Heart left ventricle (tissue), 16 donors: ENCODE measurements at regions of chr1 and their contacts with region 1.

Region 1: GRCh38 chr1:81305997-81306452 is 494.7 kb upstream of the ADGRL2 start:
- DNase-seq: peak in 3 of 5 donors; percentile 19 to 30 (median 25)
- ATAC-seq: peak; percentile 89 to 91 (median 90)
- H3K4me3 ChIP-seq: peak overlapping the region; percentile 33 to 76 (median 54)
- H3K27ac ChIP-seq: peak overlapping the region in 8 of 12 donors; percentile 11 to 71 (median 44)
- H3K4me1 ChIP-seq: peaks cover 0 to 9% (median 0%) of the 10 kb centered on the region in 12 donors
- H3K27me3 ChIP-seq: no peaks in the 10 kb centered on the region
- CTCF ChIP-seq: peak in 11 of 12 donors; percentile 18 to 69 (median 54)
- POLR2A ChIP-seq: no peak

Region 2: DNA sequence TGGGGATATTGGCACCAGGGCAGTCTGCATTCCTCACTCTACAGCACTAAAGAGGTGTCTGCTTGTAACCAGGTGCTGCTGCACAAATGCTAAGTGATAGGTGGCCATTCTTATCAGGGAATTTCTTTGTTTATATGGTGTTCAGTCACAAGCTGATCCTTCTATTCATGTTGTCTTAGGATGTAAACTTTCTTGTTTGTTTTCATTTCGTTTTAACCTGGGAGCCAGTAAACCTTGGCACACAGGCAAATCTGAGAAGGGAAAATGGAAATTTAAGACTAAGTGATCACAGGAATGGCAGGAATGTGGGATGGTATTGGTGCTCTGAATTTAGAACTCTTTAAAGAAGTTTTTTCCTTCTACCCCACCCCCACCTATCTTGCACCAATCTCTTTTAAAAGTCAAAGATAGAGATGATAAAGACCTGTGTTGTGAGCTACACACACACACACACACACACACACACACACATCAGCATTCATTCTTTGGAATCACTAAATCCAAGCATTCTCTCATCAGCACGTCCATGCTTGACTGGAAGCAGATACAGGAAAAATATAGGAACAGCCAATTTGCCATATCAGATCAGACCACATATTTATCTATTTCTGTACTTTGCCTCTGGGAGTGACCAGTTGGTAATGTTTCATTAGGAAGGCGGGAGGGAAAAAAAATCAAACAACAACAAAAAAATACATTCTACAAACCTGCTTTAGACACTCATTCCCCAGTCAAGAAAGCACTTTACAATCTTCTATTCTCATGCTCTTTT is 43.4 kb after region 1 on chr1:
- intact Hi-C with region 1: no loop called
- DNase-seq: no peak
- ATAC-seq: no peak
- H3K4me3 ChIP-seq: no peak overlapping the region
- H3K27ac ChIP-seq: no peak overlapping the region
- H3K4me1 ChIP-seq: peaks cover 0 to 11% (median 0%) of the 10 kb centered on the region in 12 donors
- H3K27me3 ChIP-seq: no peaks in the 10 kb centered on the region
- CTCF ChIP-seq: no peak
- POLR2A ChIP-seq: no peak

Region 3: DNA sequence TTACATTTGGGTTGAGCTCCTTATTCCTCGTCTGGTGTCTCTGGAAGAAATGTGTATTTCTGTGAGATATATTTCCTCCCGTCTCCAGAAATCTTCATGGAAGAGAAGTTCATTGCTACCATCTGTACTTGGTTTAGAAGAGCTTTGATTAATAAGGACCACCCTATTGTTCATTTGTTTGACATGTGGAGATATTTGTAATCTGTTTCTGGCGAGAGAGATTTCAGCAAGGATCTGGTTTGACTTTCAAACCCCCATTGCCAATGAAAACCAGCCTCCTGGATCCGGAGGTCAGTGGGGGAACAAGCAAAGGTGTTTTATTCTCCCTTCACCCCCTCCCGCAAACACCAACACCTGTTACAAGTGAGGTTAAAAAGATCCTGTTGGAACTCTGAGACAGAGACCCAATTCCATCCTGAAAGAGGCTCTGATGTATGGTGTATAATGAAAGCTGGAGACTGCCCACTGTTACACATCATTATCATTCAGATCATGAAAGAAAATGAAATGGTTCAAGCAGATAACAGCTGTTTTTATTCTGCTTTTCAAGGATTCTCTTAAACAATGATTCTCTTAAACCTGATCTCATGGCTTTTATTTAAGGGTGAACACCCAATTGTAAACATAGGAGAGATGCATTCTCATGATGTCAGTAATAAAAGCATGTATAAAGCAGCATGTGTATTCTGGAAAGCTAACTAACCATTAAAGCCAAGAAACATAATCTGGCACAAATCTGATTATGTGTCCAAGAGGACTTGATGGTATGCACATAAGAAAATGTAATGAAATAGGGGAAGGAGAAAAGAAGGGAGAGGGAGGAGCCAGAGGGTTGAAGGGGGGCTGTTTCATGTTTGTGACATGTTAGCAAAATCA is 101.2 kb after region 1 on chr1:
- intact Hi-C with region 1: loop called in 7 of 10 experiments (anchors 2 to 10 kb)
- DNase-seq: no peak
- ATAC-seq: no peak
- H3K4me3 ChIP-seq: no peak overlapping the region
- H3K27ac ChIP-seq: peak overlapping the region in 2 of 12 donors; percentile 13 to 43
- H3K4me1 ChIP-seq: peaks cover 0 to 30% (median 10%) of the 10 kb centered on the region in 12 donors
- H3K27me3 ChIP-seq: no peaks in the 10 kb centered on the region
- CTCF ChIP-seq: no peak
- POLR2A ChIP-seq: no peak

Region 4: DNA sequence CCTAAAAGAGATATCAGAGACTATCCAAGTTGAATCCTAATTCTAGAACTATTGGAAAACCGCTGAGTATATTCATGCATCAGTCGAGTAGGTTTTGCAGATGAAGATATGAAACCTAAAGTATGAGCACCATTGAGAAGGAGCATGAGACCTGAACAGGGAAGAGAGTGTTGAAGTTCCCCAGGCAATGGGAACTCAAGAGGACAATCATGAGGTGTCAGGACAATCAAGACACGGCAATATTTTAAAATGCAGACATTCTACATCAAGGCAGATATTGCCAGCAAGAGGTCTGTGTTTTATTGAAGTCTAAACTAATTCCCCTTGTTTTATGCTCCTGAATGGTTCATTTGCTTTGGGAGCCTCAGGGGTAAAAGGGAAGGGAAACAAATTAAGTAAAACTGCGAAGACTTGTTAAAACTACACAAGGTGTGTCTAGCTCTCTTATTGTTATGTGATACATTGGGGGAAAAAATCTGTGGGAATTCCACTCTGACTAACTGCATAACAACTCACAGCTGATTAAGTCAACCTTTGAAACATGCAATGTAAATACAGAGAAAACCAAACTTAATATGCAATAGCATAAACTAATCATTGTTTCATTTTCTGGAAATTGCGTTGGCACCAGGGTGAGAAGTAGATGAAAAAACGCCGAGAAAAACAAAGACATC is 146.8 kb after region 1 on chr1:
- intact Hi-C with region 1: no loop called
- DNase-seq: no peak
- ATAC-seq: no peak
- H3K4me3 ChIP-seq: no peak overlapping the region
- H3K27ac ChIP-seq: no peak overlapping the region
- H3K4me1 ChIP-seq: no peaks in the 10 kb centered on the region
- H3K27me3 ChIP-seq: no peaks in the 10 kb centered on the region
- CTCF ChIP-seq: no peak
- POLR2A ChIP-seq: no peak

Region 5: GRCh38 chr1:81478219-81478618 is 172.2 kb after region 1 on chr1:
- intact Hi-C with region 1: loop called in 1 of 10 experiments (anchors 5 kb)
- DNase-seq: peak; percentile 66 to 82 (median 71)
- ATAC-seq: peak; percentile 92 to 99 (median 98)
- H3K4me3 ChIP-seq: peak overlapping the region in 9 of 12 donors; percentile 29 to 44 (median 35)
- H3K27ac ChIP-seq: peak overlapping the region in 10 of 12 donors; percentile 18 to 64 (median 32)
- H3K4me1 ChIP-seq: peaks cover 0 to 17% (median 5%) of the 10 kb centered on the region in 12 donors
- H3K27me3 ChIP-seq: no peaks in the 10 kb centered on the region
- CTCF ChIP-seq: no peak
- POLR2A ChIP-seq: no peak

Region 6: GRCh38 chr1:81493102-81493869 is 187.3 kb after region 1 on chr1:
- intact Hi-C with region 1: loop called in 2 of 10 experiments (anchors 5 to 10 kb)
- DNase-seq: no peak
- ATAC-seq: peak; percentile 91 to 98 (median 96)
- H3K4me3 ChIP-seq: no peak overlapping the region
- H3K27ac ChIP-seq: peak overlapping the region; percentile 14 to 87 (median 78)
- H3K4me1 ChIP-seq: peaks cover 3 to 36% (median 19%) of the 10 kb centered on the region in 12 donors
- H3K27me3 ChIP-seq: no peaks in the 10 kb centered on the region
- CTCF ChIP-seq: no peak
- POLR2A ChIP-seq: no peak

Region 7: GRCh38 chr1:81664341-81664740 is 358.3 kb after region 1 on chr1:
- intact Hi-C with region 1: no loop called
- DNase-seq: no peak
- ATAC-seq: no peak
- H3K4me3 ChIP-seq: no peak overlapping the region
- H3K27ac ChIP-seq: no peak overlapping the region
- H3K4me1 ChIP-seq: peaks cover 0 to 11% (median 0%) of the 10 kb centered on the region in 12 donors
- H3K27me3 ChIP-seq: no peaks in the 10 kb centered on the region
- CTCF ChIP-seq: no peak
- POLR2A ChIP-seq: no peak

Region 8: DNA sequence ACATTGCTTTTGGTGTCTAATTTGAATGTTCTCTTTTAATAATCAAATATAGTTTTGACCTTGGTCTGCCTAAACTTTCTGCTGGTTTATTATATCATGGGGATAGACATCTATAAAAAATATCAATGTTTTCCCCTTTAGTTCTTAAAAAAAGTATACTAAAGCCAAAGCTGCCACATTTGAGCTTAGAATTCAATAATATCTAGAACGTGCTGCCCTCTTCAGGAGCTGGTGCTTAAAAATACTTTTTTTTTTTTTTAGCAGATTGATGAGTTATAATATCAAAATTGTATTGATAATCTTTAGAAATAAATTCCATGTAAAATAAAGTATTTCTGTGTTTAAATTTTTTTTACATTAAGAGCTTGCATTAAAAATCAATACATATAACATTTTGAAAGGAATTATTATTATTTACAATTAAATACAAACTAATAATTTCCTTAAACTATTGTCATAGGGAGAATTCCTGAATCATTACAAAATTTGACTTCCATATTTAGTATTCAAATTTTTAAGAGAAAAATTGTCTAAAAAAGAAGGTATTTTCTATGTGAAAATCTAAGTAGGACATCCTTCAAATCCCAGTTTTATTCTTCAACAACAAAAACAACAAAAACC is 454.6 kb after region 1 on chr1:
- intact Hi-C with region 1: loop called in 4 of 10 experiments (anchors 5 kb)
- DNase-seq: no peak
- ATAC-seq: no peak
- H3K4me3 ChIP-seq: no peak overlapping the region
- H3K27ac ChIP-seq: no peak overlapping the region
- H3K4me1 ChIP-seq: peaks cover 0 to 15% (median 3%) of the 10 kb centered on the region in 12 donors
- H3K27me3 ChIP-seq: no peaks in the 10 kb centered on the region
- CTCF ChIP-seq: peak in 10 of 12 donors; percentile 17 to 63 (median 54)
- POLR2A ChIP-seq: no peak

Region 9: DNA sequence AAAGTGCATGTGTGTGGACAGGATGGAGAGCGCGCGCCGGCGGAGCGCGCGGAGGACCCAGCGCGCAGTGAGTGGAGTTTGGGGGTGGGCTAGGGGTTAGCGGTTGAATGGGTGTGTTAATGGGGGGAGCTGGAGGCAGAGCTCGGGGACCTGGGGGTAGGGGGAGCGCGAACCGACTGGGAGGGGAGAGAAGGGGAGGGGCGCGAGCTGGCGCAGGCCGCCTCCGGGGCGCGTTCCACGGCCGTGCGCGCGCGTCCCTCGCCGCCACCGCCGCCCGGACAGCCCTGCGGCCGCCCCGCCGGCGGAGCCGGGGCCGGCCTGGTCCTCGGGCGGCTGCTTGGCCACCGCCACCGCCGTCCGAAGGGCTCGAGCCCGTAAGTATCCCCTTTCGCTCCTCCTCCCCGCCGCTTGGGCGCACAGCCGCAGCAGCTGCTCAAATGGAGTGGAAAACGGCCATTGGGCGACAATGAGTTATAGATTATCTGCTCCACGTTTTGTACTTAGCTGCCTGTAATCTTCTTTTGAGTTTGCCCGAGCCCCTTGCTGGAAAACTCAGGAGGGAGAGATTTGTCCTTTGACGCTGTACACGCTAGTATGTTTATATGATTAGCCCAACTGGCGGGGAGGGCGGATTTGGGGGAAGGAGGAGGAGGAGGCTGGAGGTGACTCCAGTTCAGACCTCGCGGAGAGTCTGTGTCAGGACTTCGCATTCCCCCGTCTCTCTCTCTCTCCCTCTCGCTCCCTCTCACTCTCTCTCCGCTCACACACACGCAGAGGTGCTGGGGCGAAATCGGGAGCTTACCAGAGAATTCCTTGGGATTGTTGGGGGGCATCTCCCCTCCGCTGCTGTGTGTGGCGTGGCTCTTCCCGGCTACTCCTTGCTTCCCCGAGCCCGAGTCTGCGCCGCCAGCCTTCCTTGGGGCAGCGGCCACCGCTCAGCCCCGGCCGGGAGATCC is 494.9 kb after region 1 on chr1 and contains the start of gene ADGRL2:
- intact Hi-C with region 1: loop called in 8 of 10 experiments (anchors 1 to 10 kb)
- DNase-seq: peak; percentile 77 to 89 (median 88)
- ATAC-seq: peak; percentile 86 to 91 (median 89)
- H3K4me3 ChIP-seq: peak within 1 kb of the TSS; percentile 65 to 98 (median 92)
- H3K27ac ChIP-seq: peak within 1 kb of the TSS; percentile 96 to 98 (median 98)
- H3K4me1 ChIP-seq: peaks cover 0 to 29% (median 17%) of the 10 kb centered on the region in 12 donors
- H3K27me3 ChIP-seq: peaks cover 0 to 25% (median 0%) of the 10 kb centered on the region in 9 donors
- CTCF ChIP-seq: no peak
- POLR2A ChIP-seq: peak in 1 of 2 donors; percentile 59
- total RNA-seq, gene ADGRL2: 49.7 to 82.8 (median 58.4) TPM